ENCODE measurements at regions of chr5 and their contacts with region 1.

Region 1: GRCh38 chr5:134140530-134141201 is 26.2 kb downstream of the TCF7 start:
- DNase-seq: peak; percentile 67
- ATAC-seq: peak; percentile 77
- H3K4me3 ChIP-seq: no peak overlapping the region
- H3K27ac ChIP-seq: no peak overlapping the region
- H3K4me1 ChIP-seq: no peaks in the 10 kb centered on the region
- H3K27me3 ChIP-seq: no peaks in the 10 kb centered on the region
- CTCF ChIP-seq: peak; percentile 79

Region 2: DNA sequence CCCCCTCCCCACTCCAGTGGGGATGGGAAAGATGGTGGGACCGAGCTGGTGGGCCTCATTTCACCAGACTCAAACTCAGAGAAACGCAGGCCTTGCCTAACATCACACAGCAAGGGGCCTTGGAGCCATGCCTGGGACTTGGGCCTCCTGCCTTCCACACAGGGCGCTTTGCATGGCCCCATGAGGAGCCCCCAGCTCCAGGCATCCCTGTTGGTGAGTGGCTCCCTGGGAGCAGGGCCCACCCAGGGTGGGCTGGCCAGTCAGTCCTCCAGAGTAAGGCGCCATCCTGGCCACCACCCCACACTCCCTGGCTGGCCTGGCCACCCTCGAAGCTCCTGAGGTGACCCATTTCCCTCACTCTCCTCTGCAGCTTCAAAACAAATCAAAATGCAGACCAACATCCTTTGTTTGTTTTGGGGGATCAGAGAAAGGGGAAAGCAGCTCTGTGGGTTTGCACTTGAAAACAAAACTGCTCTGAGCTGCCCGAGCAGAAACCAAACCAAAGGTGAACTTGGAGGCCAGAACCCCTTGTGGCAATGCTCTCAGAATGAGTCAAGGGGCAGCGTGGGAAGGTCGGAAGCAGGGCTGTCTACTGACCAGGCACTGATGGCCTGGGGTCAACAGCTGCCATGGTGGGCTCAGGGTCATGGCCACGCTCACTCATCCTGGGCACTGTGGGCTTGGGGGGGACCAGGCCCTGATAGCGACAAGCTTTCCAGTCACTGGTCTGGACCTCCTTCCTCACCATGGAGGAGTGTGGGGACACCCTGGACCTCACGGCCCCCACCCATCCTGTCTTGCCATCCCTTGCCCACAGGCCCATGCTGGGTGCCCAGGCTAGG is 98.9 kb before region 1 on chr5:
- intact Hi-C with region 1: loop called (anchors 10 kb)
- DNase-seq: no peak
- ATAC-seq: no peak
- H3K4me3 ChIP-seq: no peak overlapping the region
- H3K27ac ChIP-seq: no peak overlapping the region
- H3K4me1 ChIP-seq: no peaks in the 10 kb centered on the region
- H3K27me3 ChIP-seq: no peaks in the 10 kb centered on the region
- CTCF ChIP-seq: no peak

Region 3: GRCh38 chr5:134101686-134102439 is 38.8 kb before region 1 on chr5:
- intact Hi-C with region 1: loop called (anchors 5 kb)
- DNase-seq: peak; percentile 82
- ATAC-seq: peak; percentile 89
- H3K4me3 ChIP-seq: no peak overlapping the region
- H3K27ac ChIP-seq: no peak overlapping the region
- H3K4me1 ChIP-seq: no peaks in the 10 kb centered on the region
- H3K27me3 ChIP-seq: no peaks in the 10 kb centered on the region
- CTCF ChIP-seq: peak; percentile 93

Measured in upper lobe of right lung (tissue), 1 donor.